HEK293 (cell line): ENCODE measurements at regions of chr2 and their contacts with region 1.

Region 1: GRCh38 chr2:182784777-182785176 is 68.7 kb downstream of the DNAJC10 start:
- H3K4me3 ChIP-seq: no peak overlapping the region
- H3K27ac ChIP-seq: no peak overlapping the region
- H3K4me1 ChIP-seq: no peaks in the 10 kb centered on the region
- CTCF ChIP-seq: peak; percentile 53

Region 2: GRCh38 chr2:182655750-182656149 is 129.0 kb before region 1 on chr2:
- CTCF ChIA-PET with region 1: no interaction called
- POLR2A ChIA-PET with region 1: no interaction called
- H3K4me3 ChIP-seq: no peak overlapping the region
- H3K27ac ChIP-seq: no peak overlapping the region
- H3K4me1 ChIP-seq: no peaks in the 10 kb centered on the region
- CTCF ChIP-seq: no peak

Region 3: GRCh38 chr2:182807319-182807718 is 22.5 kb after region 1 on chr2:
- CTCF ChIA-PET with region 1: interaction called, 11 read pairs
- POLR2A ChIA-PET with region 1: no interaction called
- H3K4me3 ChIP-seq: no peak overlapping the region
- H3K27ac ChIP-seq: no peak overlapping the region
- H3K4me1 ChIP-seq: no peaks in the 10 kb centered on the region
- CTCF ChIP-seq: no peak

Region 4: GRCh38 chr2:182866461-182867406 is 82.0 kb after region 1 on chr2 and contains the start of gene FRZB:
- CTCF ChIA-PET with region 1: interaction called, 30 read pairs
- POLR2A ChIA-PET with region 1: no interaction called
- H3K4me3 ChIP-seq: peak within 1 kb of the TSS; percentile 25
- H3K27ac ChIP-seq: no peak within 1 kb of the TSS
- H3K4me1 ChIP-seq: peaks cover 10% of the 10 kb centered on the region
- CTCF ChIP-seq: no peak

Region 5: GRCh38 chr2:182933629-182934028 is 148.9 kb after region 1 on chr2:
- CTCF ChIA-PET with region 1: no interaction called
- POLR2A ChIA-PET with region 1: no interaction called
- H3K4me3 ChIP-seq: no peak overlapping the region
- H3K27ac ChIP-seq: no peak overlapping the region
- H3K4me1 ChIP-seq: no peaks in the 10 kb centered on the region
- CTCF ChIP-seq: no peak

Region 6: GRCh38 chr2:182949572-182950189 is 164.9 kb after region 1 on chr2:
- CTCF ChIA-PET with region 1: interaction called, 13 read pairs
- POLR2A ChIA-PET with region 1: no interaction called
- H3K4me3 ChIP-seq: no peak overlapping the region
- H3K27ac ChIP-seq: no peak overlapping the region
- H3K4me1 ChIP-seq: no peaks in the 10 kb centered on the region
- CTCF ChIP-seq: no peak

Region 7: GRCh38 chr2:182980115-182980514 is 195.3 kb after region 1 on chr2:
- CTCF ChIA-PET with region 1: interaction called, 50 read pairs
- POLR2A ChIA-PET with region 1: no interaction called
- H3K4me3 ChIP-seq: no peak overlapping the region
- H3K27ac ChIP-seq: no peak overlapping the region
- H3K4me1 ChIP-seq: no peaks in the 10 kb centered on the region
- CTCF ChIP-seq: peak; percentile 36; the same call in 1 of the 2 replicates